ENCODE measurements at regions of chr2 and their contacts with region 1.

Region 1: DNA sequence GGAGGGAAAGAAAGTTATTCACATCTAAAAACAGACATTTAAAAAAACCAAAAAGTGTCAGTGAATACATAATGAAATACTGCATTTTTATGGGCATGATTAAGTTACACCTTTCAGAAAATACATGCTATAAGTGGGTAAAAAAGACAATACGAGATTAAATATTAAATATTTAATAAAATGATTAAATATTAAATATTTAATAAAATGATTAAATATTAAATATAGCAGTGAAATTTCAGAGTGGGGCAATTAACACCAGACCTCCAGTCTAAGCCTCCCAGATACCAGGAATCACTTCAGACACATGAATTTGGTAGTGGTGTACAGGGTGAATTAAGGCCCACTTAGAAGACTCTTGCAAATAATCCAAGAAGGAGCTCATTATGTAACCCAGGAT is 15.5 kb downstream of the RBM43 start:
- DNase-seq: no peak

Region 2: GRCh38 chr2:150778828-150779227 is 467.3 kb before region 1 on chr2:
- intact Hi-C with region 1: loop called in 1 of 2 experiments (anchors 5 kb)
- DNase-seq: no peak

Region 3: GRCh38 chr2:150944315-150944714 is 301.8 kb before region 1 on chr2:
- intact Hi-C with region 1: no loop called
- DNase-seq: no peak